Caco-2 (cell line): ENCODE measurements at regions of chr6 and their contacts with region 1.

Region 1: GRCh38 chr6:142387997-142388815 is 86.4 kb downstream of the ADGRG6 start:
- DNase-seq: peak in 1 of 2 experiments; percentile 46
- H3K4me3 ChIP-seq: no peak overlapping the region
- H3K4me3 Mint-ChIP-seq: no peak overlapping the region
- H3K27ac Mint-ChIP-seq: peak overlapping the region; percentile 38
- H3K4me1 ChIP-seq: no peaks in the 10 kb centered on the region; the same call in 1 of the 2 replicates
- H3K4me1 Mint-ChIP-seq: peaks cover 10% of the 10 kb centered on the region
- H3K27me3 ChIP-seq: no peaks in the 10 kb centered on the region
- H3K27me3 Mint-ChIP-seq: no peaks in the 10 kb centered on the region
- CTCF ChIP-seq: peak; percentile 60 to 69

Region 2: GRCh38 chr6:142146828-142147662 is 241.2 kb before region 1 on chr6 and contains the starts of genes NMBR and VTA1:
- CTCF ChIA-PET with region 1: interaction called, 3 read pairs
- POLR2A ChIA-PET with region 1: no interaction called
- intact Hi-C with region 1: loop called (anchors 1 kb)
- DNase-seq: peak; percentile 97 to 99
- H3K4me3 ChIP-seq: peak within 1 kb of the TSS; percentile 55
- H3K4me3 Mint-ChIP-seq: peak within 1 kb of the TSS; percentile 96
- H3K27ac Mint-ChIP-seq: peak within 1 kb of the TSS; percentile 85
- H3K4me1 ChIP-seq: no peaks in the 10 kb centered on the region
- H3K4me1 Mint-ChIP-seq: peaks cover 21% of the 10 kb centered on the region
- H3K27me3 ChIP-seq: no peaks in the 10 kb centered on the region
- H3K27me3 Mint-ChIP-seq: peaks cover 7% of the 10 kb centered on the region
- CTCF ChIP-seq: peak; percentile 85 to 91
- total RNA-seq, gene NMBR: not detected in 2 replicates
- total RNA-seq, gene VTA1: 51.1 and 55.1 TPM in 2 replicates

Region 3: DNA sequence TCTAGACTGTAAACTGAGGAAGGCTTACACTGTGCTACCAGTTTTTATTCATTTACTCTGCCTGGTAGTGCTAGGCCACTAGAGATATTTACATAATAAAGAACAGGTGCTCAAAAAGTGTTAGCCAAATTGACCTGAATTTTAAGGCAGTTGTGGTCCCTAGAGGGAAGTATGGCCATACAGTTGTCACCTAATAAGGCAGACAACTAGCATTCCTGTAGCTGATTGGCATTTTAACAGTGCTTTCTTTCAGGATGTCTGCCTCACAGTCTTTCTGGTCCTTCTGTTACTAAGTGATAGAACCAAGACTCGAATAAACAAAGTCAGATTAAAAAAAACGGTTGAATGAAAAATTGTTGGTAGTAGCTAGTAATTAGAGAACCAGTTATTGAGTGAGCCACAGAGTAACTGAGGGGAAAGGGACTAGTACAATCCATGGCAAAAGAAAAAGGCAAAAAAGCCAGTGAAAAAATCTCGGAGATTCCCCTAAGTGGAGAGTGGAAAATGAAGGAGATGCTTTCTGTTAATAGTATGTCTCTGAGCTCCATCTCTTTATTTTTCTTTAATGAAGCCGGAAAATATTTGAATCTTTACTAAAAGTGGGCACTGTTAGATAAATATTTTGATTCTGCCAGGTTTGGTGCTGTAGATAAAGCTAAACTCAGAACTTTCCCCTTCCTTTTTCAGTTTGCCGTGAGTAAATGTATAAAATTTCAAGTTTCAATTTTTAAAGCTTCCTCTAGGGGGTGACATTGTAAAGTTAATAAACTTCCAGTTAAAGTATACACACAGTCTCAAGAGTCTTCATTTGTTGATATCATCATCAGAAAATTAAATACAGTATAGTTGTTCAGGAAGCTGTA is 232.1 kb before region 1 on chr6:
- CTCF ChIA-PET with region 1: interaction called, 4 read pairs
- POLR2A ChIA-PET with region 1: no interaction called
- intact Hi-C with region 1: loop called (anchors 1 kb)
- DNase-seq: peak in 1 of 2 experiments; percentile 13
- H3K4me3 ChIP-seq: no peak overlapping the region
- H3K4me3 Mint-ChIP-seq: no peak overlapping the region
- H3K27ac Mint-ChIP-seq: no peak overlapping the region
- H3K4me1 ChIP-seq: no peaks in the 10 kb centered on the region
- H3K4me1 Mint-ChIP-seq: no peaks in the 10 kb centered on the region
- H3K27me3 ChIP-seq: no peaks in the 10 kb centered on the region
- H3K27me3 Mint-ChIP-seq: no peaks in the 10 kb centered on the region
- CTCF ChIP-seq: peak; percentile 36 to 46

Region 4: GRCh38 chr6:142207265-142207877 is 180.8 kb before region 1 on chr6:
- CTCF ChIA-PET with region 1: no interaction called
- POLR2A ChIA-PET with region 1: no interaction called
- intact Hi-C with region 1: loop called (anchors 2 kb)
- DNase-seq: peak; percentile 54 to 69
- H3K4me3 ChIP-seq: no peak overlapping the region
- H3K4me3 Mint-ChIP-seq: no peak overlapping the region
- H3K27ac Mint-ChIP-seq: no peak overlapping the region
- H3K4me1 ChIP-seq: no peaks in the 10 kb centered on the region
- H3K4me1 Mint-ChIP-seq: no peaks in the 10 kb centered on the region
- H3K27me3 ChIP-seq: no peaks in the 10 kb centered on the region
- H3K27me3 Mint-ChIP-seq: no peaks in the 10 kb centered on the region
- CTCF ChIP-seq: peak; percentile 81 to 87

Region 5: GRCh38 chr6:142236691-142237090 is 151.5 kb before region 1 on chr6:
- CTCF ChIA-PET with region 1: interaction called, 4 read pairs
- POLR2A ChIA-PET with region 1: no interaction called
- intact Hi-C with region 1: loop called (anchors 1 kb)
- DNase-seq: no peak
- H3K4me3 ChIP-seq: no peak overlapping the region
- H3K4me3 Mint-ChIP-seq: no peak overlapping the region
- H3K27ac Mint-ChIP-seq: no peak overlapping the region
- H3K4me1 ChIP-seq: peaks cover 12% of the 10 kb centered on the region
- H3K4me1 Mint-ChIP-seq: peaks cover 6% of the 10 kb centered on the region
- H3K27me3 ChIP-seq: no peaks in the 10 kb centered on the region
- H3K27me3 Mint-ChIP-seq: no peaks in the 10 kb centered on the region
- CTCF ChIP-seq: no peak

Region 6: DNA sequence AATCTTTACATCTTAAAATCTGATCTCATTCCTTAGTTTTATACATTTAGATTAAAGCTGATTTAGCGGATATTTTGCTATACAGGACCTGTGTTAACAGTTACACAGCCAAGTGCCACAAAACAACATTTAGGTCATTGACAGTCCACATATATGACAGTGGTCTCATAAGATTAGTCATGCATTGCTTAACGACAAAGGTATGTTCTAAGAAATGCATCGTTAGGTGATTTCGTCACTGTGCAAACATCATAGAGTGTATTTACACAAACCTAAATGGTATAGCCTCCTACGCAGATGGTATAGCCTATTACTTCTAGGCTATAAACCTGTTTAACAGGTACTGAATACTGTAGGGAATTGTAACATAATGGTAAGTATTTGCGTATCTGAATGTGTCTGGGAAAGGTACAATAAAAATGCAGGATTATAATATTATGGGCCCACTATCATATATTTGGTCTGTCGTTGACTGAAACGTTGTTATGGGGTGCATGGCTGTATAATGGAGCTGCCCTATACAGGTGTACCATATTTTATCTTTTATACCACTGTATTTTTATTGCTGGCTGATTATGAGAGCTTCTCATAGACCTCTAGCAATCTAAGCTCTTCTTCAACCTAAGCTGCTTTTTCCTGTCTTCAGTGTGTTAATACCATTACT is 64.7 kb before region 1 on chr6:
- CTCF ChIA-PET with region 1: no interaction called
- POLR2A ChIA-PET with region 1: no interaction called
- intact Hi-C with region 1: no loop called
- DNase-seq: peak; percentile 49 to 80
- H3K4me3 ChIP-seq: no peak overlapping the region
- H3K4me3 Mint-ChIP-seq: peak overlapping the region; percentile 29
- H3K27ac Mint-ChIP-seq: peak overlapping the region; percentile 80
- H3K4me1 ChIP-seq: peaks cover 70% of the 10 kb centered on the region
- H3K4me1 Mint-ChIP-seq: peaks cover 52% of the 10 kb centered on the region
- H3K27me3 ChIP-seq: no peaks in the 10 kb centered on the region
- H3K27me3 Mint-ChIP-seq: no peaks in the 10 kb centered on the region
- CTCF ChIP-seq: no peak

Region 7: GRCh38 chr6:142446168-142446567 is 58.0 kb after region 1 on chr6:
- CTCF ChIA-PET with region 1: no interaction called
- POLR2A ChIA-PET with region 1: no interaction called
- intact Hi-C with region 1: no loop called
- DNase-seq: no peak
- H3K4me3 ChIP-seq: no peak overlapping the region
- H3K4me3 Mint-ChIP-seq: no peak overlapping the region
- H3K27ac Mint-ChIP-seq: no peak overlapping the region
- H3K4me1 ChIP-seq: no peaks in the 10 kb centered on the region
- H3K4me1 Mint-ChIP-seq: no peaks in the 10 kb centered on the region
- H3K27me3 ChIP-seq: no peaks in the 10 kb centered on the region
- H3K27me3 Mint-ChIP-seq: no peaks in the 10 kb centered on the region
- CTCF ChIP-seq: no peak